ENCODE measurements at regions of chr16 and their contacts with region 1.

Region 1: GRCh38 chr16:3457434-3458252 is 14.2 kb downstream of the NAA60 start:
- DNase-seq: peak; percentile 89 to 96
- ATAC-seq: peak; percentile 88 to 96 (median 91)
- H3K4me3 ChIP-seq: peak overlapping the region; percentile 66
- H3K4me3 Mint-ChIP-seq: peak overlapping the region; percentile 81
- H3K27ac ChIP-seq: peak overlapping the region; percentile 85
- H3K27ac Mint-ChIP-seq: peak overlapping the region; percentile 75 to 86
- H3K4me1 ChIP-seq: peaks cover 40% of the 10 kb centered on the region
- H3K4me1 Mint-ChIP-seq: peaks cover 44 to 47% of the 10 kb centered on the region in 2 donors
- H3K27me3 ChIP-seq: no peaks in the 10 kb centered on the region
- H3K27me3 Mint-ChIP-seq: no peaks in the 10 kb centered on the region
- CTCF ChIP-seq: peak; percentile 19

Region 2: DNA sequence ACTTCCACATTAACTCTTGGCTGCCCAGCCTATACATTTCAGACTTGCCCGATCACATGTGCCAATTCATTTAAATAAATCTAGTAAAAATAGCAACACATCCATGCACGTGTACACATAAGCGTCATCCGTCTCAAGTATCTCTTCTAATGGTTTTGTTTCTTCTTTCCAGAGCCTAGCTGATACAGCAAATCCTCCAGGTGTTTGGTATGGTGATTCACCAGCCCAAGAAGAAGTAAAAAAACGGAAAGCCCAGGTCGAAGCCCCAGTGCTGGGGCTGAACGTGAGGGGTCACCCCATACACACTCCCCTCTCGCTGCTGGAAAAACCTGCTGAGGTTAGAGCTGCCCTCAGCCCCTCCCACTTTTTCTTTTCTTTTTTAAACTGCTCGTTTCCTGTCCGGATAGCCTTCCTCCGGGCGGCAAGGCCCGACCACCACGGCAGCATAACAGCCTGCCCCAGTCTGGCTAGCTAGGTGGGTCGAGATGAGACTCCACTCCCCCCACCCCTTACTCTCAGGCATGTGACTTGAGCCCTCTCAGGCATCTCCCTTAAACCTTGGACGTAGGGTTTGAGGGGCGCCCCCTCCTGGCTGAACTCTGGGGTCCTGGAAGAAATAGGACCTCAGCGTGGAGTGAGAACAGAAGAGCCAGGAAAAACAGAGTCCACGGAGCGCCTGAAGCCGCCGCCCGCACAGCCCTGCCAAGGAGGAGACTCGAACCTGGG is 283.6 kb before region 1 on chr16:
- intact Hi-C with region 1: no loop called
- DNase-seq: peak in 1 of 2 donors; percentile 26
- ATAC-seq: peak in 2 of 3 donors; percentile 17 to 27
- H3K4me3 ChIP-seq: no peak overlapping the region
- H3K4me3 Mint-ChIP-seq: peak overlapping the region; percentile 31
- H3K27ac ChIP-seq: no peak overlapping the region
- H3K27ac Mint-ChIP-seq: peak overlapping the region in 1 of 2 donors; percentile 57
- H3K4me1 ChIP-seq: peaks cover 41% of the 10 kb centered on the region
- H3K4me1 Mint-ChIP-seq: peaks cover 26 to 30% of the 10 kb centered on the region in 2 donors
- H3K27me3 ChIP-seq: peaks cover 64% of the 10 kb centered on the region
- H3K27me3 Mint-ChIP-seq: peaks cover 53% of the 10 kb centered on the region in 2 donors
- CTCF ChIP-seq: no peak

Region 3: DNA sequence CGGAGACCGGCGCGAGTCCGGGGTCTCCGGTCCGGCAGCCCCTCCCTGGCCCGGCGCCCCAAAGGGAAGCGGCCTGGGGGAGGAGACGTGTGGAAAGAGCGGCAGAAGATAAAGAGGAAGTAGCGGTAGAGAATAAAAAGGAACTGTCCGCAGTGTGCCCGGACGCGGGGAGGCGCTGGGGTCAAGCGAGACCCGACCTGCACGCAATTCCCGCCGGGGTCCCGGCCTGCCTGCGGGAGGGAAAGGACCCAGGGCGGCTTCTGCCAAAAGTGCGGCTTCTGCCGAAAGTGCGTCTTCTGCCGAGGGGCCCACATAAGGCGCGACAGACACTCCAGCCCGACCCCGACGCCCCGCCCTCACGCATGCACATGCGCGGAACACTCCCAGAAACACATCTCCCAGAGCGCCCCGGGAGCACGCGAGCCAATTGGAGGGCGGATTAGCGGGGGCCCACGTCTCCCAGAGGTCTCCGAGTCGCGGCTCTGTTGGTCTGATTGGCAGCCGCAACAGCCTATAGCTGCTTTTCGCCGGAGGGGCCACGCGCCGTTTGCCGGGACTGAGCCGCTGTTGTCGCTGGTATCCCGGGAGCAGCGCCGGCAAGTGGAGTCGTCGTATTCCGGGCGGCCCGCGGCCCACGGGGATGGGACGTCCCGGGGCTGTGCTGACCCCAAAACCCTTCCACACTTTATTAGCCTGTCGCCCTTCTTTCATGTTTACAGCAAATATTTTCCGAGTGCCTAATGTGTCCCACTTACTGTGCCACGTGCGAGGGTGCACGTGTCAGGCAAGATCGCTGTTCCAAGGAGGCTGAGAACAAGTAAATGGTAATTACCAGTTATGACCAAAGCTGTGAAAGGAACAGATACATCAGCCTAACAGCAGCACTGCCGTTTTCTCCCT is 193.3 kb before region 1 on chr16:
- intact Hi-C with region 1: loop called (anchors 1 kb)
- DNase-seq: peak; percentile 93 to 97
- ATAC-seq: peak; percentile 87 to 90 (median 88)
- H3K4me3 ChIP-seq: peak overlapping the region; percentile 77
- H3K4me3 Mint-ChIP-seq: peak overlapping the region; percentile 90
- H3K27ac ChIP-seq: peak overlapping the region; percentile 95
- H3K27ac Mint-ChIP-seq: peak overlapping the region; percentile 92 to 93
- H3K4me1 ChIP-seq: peaks cover 17% of the 10 kb centered on the region
- H3K4me1 Mint-ChIP-seq: peaks cover 18 to 27% of the 10 kb centered on the region in 2 donors
- H3K27me3 ChIP-seq: no peaks in the 10 kb centered on the region
- H3K27me3 Mint-ChIP-seq: no peaks in the 10 kb centered on the region
- CTCF ChIP-seq: no peak

Region 4: DNA sequence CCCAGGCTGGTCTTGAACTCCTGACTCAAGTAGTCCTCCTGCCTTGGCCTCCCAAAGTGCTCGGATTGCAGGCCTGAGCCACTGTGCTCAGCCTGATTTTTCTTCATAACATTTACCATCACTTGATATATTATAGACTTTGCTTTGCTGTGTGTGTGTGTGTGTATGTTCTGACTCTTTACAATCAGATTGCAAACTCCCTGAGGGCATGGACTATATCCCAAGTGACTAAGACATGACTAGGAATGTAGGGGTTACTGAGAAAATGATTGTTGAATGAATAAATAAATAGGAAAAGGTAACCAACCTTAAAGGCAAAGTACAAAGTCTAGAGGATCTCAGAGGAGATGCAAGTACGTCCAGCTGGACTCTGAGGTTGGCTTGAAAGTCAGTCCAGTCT is 111.6 kb before region 1 on chr16:
- intact Hi-C with region 1: no loop called
- DNase-seq: no peak
- ATAC-seq: no peak
- H3K4me3 ChIP-seq: no peak overlapping the region
- H3K4me3 Mint-ChIP-seq: no peak overlapping the region
- H3K27ac ChIP-seq: no peak overlapping the region
- H3K27ac Mint-ChIP-seq: no peak overlapping the region
- H3K4me1 ChIP-seq: no peaks in the 10 kb centered on the region
- H3K4me1 Mint-ChIP-seq: no peaks in the 10 kb centered on the region
- H3K27me3 ChIP-seq: peaks cover 2% of the 10 kb centered on the region
- H3K27me3 Mint-ChIP-seq: peaks cover 3 to 7% of the 10 kb centered on the region in 2 donors
- CTCF ChIP-seq: no peak

Region 5: DNA sequence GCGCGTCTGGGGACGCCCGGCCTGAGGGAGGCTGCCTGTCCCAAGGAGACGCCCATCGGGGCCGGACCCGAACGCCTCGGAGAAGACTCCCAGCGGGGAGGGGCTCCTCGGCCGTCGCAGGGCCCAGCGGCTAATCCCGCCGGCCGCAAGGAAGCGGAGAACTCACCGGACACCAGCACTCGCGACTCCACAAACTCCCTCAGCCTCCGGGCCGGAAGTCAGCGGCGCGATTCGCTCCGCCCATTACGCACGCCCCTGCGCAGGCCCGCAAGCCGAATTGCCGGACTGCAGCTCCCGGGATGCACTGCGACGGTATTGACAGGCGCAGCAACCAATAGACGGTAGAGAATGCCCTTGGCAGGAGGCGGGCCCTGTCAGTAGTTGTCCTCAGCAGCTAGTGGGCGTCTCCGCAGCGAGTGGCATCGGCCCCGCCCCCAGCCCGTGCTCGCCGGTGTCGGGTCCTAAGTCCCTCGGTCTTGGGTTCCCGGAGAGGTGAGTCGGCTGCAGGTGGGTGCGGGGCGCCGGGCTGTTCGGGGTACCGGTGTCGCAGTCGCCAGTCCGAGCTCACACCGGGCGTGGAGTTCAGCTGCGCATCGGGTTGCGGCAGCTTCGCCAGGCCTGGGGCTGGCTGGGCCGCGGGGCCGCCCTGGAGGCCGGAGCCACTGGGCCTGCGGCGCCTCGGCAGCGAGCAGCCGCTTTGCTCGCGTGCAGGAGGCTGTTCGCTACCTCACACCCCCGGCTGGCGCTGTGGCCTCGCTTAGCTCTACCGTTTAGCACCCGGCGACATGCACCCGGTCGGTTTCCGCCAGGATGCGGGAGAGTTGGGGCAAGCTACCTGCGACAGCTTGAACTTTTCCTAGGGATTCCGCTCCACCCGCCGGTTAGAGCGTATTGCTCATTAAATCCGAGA is 56.6 kb before region 1 on chr16 and contains the starts of genes ZNF174 and ZSCAN32:
- intact Hi-C with region 1: loop called (anchors 1 kb)
- DNase-seq: peak; percentile 98 to 99
- ATAC-seq: peak; percentile 96 to 99 (median 97)
- H3K4me3 ChIP-seq: peak within 1 kb of the TSS; percentile 68
- H3K4me3 Mint-ChIP-seq: peak within 1 kb of the TSS; percentile 95
- H3K27ac ChIP-seq: peak within 1 kb of the TSS; percentile 74
- H3K27ac Mint-ChIP-seq: peak within 1 kb of the TSS; percentile 87 to 90
- H3K4me1 ChIP-seq: peaks cover 19% of the 10 kb centered on the region
- H3K4me1 Mint-ChIP-seq: peaks cover 41 to 48% of the 10 kb centered on the region in 2 donors
- H3K27me3 ChIP-seq: no peaks in the 10 kb centered on the region
- H3K27me3 Mint-ChIP-seq: no peaks in the 10 kb centered on the region
- CTCF ChIP-seq: no peak
- total RNA-seq, gene ZNF174: 3.5 to 9.0 (median 7.5) TPM
- total RNA-seq, gene ZSCAN32: 7.5 to 14.2 (median 14.1) TPM

Measured in natural killer cell (primary cell).